Activated B cell treated with CpG ODN at 0.5 μM for 24 hours (primary cell): ENCODE measurements at regions of chr18 and their contacts with region 1.

Region 1: GRCh38 chr18:63155169-63155852 is 164.3 kb downstream of the BCL2 start:
- DNase-seq: peak; percentile 73
- ATAC-seq: peak; percentile 63
- H3K4me3 Mint-ChIP-seq: peak overlapping the region; percentile 84
- H3K27ac Mint-ChIP-seq: peak overlapping the region; percentile 99
- H3K4me1 Mint-ChIP-seq: peaks cover 99% of the 10 kb centered on the region
- H3K27me3 Mint-ChIP-seq: no peaks in the 10 kb centered on the region
- CTCF ChIP-seq: peak; percentile 76

Region 2: GRCh38 chr18:63016270-63016669 is 139.0 kb before region 1 on chr18:
- CTCF ChIA-PET with region 1: interaction called, 6 read pairs
- POLR2A ChIA-PET with region 1: no interaction called
- intact Hi-C with region 1: loop called (anchors 1 kb)
- DNase-seq: no peak
- ATAC-seq: peak; percentile 75
- H3K4me3 Mint-ChIP-seq: no peak overlapping the region
- H3K27ac Mint-ChIP-seq: no peak overlapping the region
- H3K4me1 Mint-ChIP-seq: no peaks in the 10 kb centered on the region
- H3K27me3 Mint-ChIP-seq: peaks cover 13% of the 10 kb centered on the region
- CTCF ChIP-seq: no peak

Region 3: DNA sequence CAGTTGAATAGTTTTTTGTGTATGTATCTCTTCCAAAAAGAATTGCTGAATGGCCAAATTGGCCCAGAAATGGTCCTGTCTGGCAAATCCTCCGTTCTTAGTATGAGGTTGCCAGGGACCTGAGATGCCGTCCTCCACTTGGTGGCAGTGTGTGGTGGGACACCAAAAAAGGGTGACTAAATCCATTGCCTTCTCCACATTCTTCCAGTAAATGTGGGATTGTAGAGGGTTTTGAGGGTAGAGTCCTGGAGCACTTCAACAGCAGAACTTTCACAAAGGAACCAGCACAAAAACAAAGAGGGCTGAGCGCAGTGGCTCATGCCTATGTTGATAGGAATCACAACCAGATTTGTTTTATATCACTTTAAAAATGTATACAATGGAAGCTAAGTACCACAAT is 35.7 kb before region 1 on chr18:
- CTCF ChIA-PET with region 1: interaction called, 4 read pairs
- POLR2A ChIA-PET with region 1: interaction called, 9 read pairs
- intact Hi-C with region 1: loop called (anchors 5 kb)
- DNase-seq: no peak
- ATAC-seq: no peak
- H3K4me3 Mint-ChIP-seq: no peak overlapping the region
- H3K27ac Mint-ChIP-seq: no peak overlapping the region
- H3K4me1 Mint-ChIP-seq: peaks cover 5% of the 10 kb centered on the region
- H3K27me3 Mint-ChIP-seq: peaks cover 2% of the 10 kb centered on the region
- CTCF ChIP-seq: no peak

Region 4: GRCh38 chr18:63138436-63139340 is 16.6 kb before region 1 on chr18:
- CTCF ChIA-PET with region 1: interaction called, 48 read pairs
- POLR2A ChIA-PET with region 1: interaction called, 180 read pairs
- intact Hi-C with region 1: loop called (anchors 1 kb)
- DNase-seq: no peak
- ATAC-seq: peak; percentile 47
- H3K4me3 Mint-ChIP-seq: peak overlapping the region; percentile 82
- H3K27ac Mint-ChIP-seq: peak overlapping the region; percentile 90
- H3K4me1 Mint-ChIP-seq: peaks cover 86% of the 10 kb centered on the region
- H3K27me3 Mint-ChIP-seq: no peaks in the 10 kb centered on the region
- CTCF ChIP-seq: no peak

Region 5: DNA sequence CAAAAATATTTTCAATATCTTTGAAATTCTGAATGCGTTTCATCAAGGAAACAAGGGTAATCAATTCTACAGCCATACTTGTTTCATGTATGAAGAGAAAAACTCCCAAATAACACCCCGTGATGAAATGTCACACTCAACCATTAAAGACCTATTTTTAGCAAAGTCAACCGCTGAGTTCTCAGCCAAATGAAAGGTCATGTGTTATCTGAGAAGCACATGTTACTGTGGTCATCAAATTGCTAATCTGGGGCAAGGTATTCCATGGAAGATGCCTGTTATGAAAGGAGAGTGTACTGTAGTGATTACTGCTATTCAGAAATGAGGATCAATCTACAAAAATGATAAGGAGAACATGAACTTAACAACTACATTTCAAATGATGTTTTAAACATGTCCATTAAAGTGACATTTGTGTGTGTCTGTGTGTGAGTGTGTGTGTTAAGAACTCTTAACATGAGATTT is 37.6 kb after region 1 on chr18:
- CTCF ChIA-PET with region 1: interaction called, 3 read pairs
- POLR2A ChIA-PET with region 1: interaction called, 5 read pairs
- intact Hi-C with region 1: loop called (anchors 2 kb)
- DNase-seq: no peak
- ATAC-seq: peak; percentile 37
- H3K4me3 Mint-ChIP-seq: peak overlapping the region; percentile 26
- H3K27ac Mint-ChIP-seq: peak overlapping the region; percentile 74
- H3K4me1 Mint-ChIP-seq: peaks cover 61% of the 10 kb centered on the region
- H3K27me3 Mint-ChIP-seq: no peaks in the 10 kb centered on the region
- CTCF ChIP-seq: no peak

Region 6: DNA sequence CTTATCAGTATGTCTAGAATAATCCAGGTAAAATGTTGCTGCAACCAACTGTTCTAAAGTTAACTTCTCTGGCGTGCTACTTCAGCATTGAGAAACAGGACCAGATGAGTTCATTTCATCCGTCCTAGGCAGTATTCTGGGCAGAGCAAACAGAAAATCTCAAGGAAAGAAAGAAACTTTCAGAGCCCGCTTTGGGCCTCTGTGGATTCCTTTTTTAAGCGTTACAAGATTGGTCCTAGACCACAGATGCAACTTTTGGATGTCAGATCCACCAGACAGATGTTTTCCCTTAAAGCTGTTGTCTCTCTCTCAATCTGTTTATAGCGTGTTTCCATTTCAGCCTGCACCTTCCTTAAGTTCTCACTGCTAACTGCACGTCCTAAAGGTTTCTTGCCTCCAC is 89.3 kb after region 1 on chr18:
- CTCF ChIA-PET with region 1: no interaction called
- POLR2A ChIA-PET with region 1: no interaction called
- intact Hi-C with region 1: no loop called
- DNase-seq: no peak
- ATAC-seq: no peak
- H3K4me3 Mint-ChIP-seq: no peak overlapping the region
- H3K27ac Mint-ChIP-seq: no peak overlapping the region
- H3K4me1 Mint-ChIP-seq: peaks cover 33% of the 10 kb centered on the region
- H3K27me3 Mint-ChIP-seq: no peaks in the 10 kb centered on the region
- CTCF ChIP-seq: no peak

Region 7: DNA sequence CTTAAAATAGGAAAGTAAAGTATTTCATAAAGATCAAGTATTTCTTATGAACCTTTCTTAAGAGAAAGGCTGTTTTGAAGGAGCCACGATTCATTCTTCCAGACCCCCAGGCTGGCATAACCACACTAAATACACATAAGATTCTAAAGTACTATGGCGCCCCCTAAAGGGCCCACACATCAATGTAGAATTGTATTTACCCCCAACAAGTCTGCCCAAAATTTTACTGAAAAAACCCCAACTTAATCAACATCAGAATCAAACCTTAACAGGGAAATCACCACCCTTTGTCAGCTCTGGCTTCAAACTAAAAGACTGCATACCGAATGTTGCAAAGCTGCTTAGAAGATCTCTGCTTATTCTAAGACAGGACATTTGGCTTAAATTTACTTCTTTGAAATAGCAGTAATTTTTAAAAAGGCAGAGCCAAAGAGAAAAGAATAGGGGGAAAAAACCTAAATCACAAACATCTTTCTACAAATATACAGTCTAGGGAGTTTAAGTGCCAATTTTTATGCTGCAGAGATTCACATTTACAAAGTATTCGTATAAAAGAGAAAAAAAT is 184.7 kb after region 1 on chr18:
- CTCF ChIA-PET with region 1: no interaction called
- POLR2A ChIA-PET with region 1: no interaction called
- intact Hi-C with region 1: no loop called
- DNase-seq: no peak
- ATAC-seq: peak; percentile 45
- H3K4me3 Mint-ChIP-seq: no peak overlapping the region
- H3K27ac Mint-ChIP-seq: no peak overlapping the region
- H3K4me1 Mint-ChIP-seq: no peaks in the 10 kb centered on the region
- H3K27me3 Mint-ChIP-seq: no peaks in the 10 kb centered on the region
- CTCF ChIP-seq: no peak